Activated CD4-positive, alpha-beta memory T cell treated with anti-CD3 and anti-CD28 coated beads for 36 hours (primary cell): ENCODE measurements at regions of chr9 and their contacts with region 1.

Region 1: GRCh38 chr9:35903049-35903448 is 3.0 kb upstream of the HRCT1 start:
- DNase-seq: peak; percentile 31
- H3K4me3 Mint-ChIP-seq: no peak overlapping the region
- H3K27ac Mint-ChIP-seq: no peak overlapping the region
- H3K4me1 Mint-ChIP-seq: peaks cover 25% of the 10 kb centered on the region
- H3K27me3 Mint-ChIP-seq: peaks cover 4% of the 10 kb centered on the region

Region 2: DNA sequence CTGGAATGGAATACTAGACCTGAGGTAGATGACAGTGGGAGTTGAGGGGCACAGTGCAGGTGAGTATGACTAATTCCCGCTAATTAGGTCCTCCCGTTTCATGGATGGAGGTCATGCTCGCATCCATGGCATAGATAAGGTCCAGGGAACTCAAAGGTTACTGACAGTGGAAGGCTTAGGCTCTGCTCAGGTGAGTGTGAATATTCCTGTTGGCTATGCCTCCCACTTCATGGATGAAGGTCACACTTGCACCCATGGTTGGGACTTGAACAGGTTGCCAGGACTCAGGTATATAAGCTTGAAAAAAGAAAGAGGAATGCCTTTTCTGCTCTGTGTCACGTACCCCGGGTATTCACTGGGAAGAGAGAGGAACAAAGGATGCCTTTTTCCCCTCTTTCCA is 761.0 kb before region 1 on chr9:
- CTCF ChIA-PET with region 1: no interaction called
- POLR2A ChIA-PET with region 1: no interaction called
- intact Hi-C with region 1: no loop called
- DNase-seq: no peak
- H3K4me3 Mint-ChIP-seq: no peak overlapping the region
- H3K27ac Mint-ChIP-seq: no peak overlapping the region
- H3K4me1 Mint-ChIP-seq: no peaks in the 10 kb centered on the region
- H3K27me3 Mint-ChIP-seq: no peaks in the 10 kb centered on the region

Region 3: DNA sequence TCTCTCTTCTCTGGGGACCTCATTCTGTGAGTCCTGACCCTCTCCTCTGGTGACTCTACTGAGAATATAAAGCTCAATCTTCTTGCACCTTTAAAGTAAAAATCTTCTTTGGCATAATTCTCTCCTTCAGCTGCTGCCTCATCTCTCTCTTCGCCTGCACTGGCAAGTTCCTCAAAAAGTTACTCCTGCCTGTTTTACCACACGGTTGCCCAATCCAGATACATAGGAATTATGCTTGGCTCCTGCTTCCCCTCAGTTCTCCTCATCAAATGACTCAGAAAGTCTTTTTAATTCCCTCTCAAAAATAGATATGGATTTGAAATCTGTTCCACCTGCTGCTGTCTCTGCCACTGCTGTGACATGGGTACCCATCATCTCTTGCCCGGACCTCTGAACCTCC is 11.4 kb before region 1 on chr9:
- CTCF ChIA-PET with region 1: interaction called, 13 read pairs
- POLR2A ChIA-PET with region 1: no interaction called
- intact Hi-C with region 1: no loop called
- DNase-seq: no peak
- H3K4me3 Mint-ChIP-seq: no peak overlapping the region
- H3K27ac Mint-ChIP-seq: no peak overlapping the region
- H3K4me1 Mint-ChIP-seq: no peaks in the 10 kb centered on the region
- H3K27me3 Mint-ChIP-seq: peaks cover 11% of the 10 kb centered on the region

Region 4: DNA sequence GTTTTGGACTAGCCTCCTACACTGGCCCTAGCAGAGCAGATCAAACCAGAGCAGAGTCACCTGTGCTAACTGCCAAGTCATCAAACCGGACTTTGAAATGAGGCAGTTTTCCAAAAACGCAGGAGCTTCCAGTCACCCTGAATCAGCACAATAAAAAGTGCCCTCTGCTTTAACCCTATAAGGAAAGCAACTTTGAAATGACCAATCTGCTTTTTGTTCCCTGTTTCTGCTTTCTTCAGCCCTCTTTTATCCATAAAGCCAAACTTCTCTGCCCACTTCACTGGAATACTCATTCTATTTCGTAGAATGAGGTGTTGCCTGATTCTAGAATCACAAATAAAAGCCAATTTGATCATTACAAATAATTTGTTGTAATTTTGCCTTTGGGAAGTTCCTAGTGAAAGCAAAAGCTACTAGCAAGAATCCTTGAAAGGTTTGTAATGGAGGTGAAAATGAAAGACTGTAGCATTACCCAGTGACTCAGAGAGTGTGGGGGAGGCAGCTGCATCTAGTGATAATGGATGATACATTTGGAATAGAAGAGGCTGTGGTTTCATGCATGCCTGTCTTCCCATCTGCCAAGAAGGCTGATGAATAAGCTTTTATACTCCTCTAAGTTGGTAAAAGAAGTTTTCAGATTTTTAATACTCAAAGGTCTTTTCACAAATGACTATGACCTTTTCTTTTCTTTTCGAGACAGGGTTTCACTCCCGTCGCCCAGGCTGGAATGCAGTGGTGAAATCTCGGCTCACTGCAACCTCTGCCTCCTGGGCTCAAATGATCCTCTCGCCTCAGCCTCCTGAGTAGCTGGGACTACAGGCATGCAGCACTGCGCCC is 21.1 kb after region 1 on chr9:
- CTCF ChIA-PET with region 1: interaction called, 14 read pairs
- POLR2A ChIA-PET with region 1: no interaction called
- intact Hi-C with region 1: no loop called
- DNase-seq: peak; percentile 71
- H3K4me3 Mint-ChIP-seq: no peak overlapping the region
- H3K27ac Mint-ChIP-seq: no peak overlapping the region
- H3K4me1 Mint-ChIP-seq: peaks cover 21% of the 10 kb centered on the region
- H3K27me3 Mint-ChIP-seq: no peaks in the 10 kb centered on the region

Region 5: GRCh38 chr9:36023260-36024048 is 120.4 kb after region 1 on chr9:
- CTCF ChIA-PET with region 1: interaction called, 55 read pairs
- POLR2A ChIA-PET with region 1: no interaction called
- intact Hi-C with region 1: loop called (anchors 2 kb)
- DNase-seq: peak; percentile 77
- H3K4me3 Mint-ChIP-seq: no peak overlapping the region
- H3K27ac Mint-ChIP-seq: no peak overlapping the region
- H3K4me1 Mint-ChIP-seq: no peaks in the 10 kb centered on the region
- H3K27me3 Mint-ChIP-seq: no peaks in the 10 kb centered on the region